ENCODE measurements at regions of chr11 and their contacts with region 1.

Region 1: GRCh38 chr11:130213143-130213978 is 53.8 kb downstream of the ST14 start:
- DNase-seq: peak; percentile 60
- H3K4me3 Mint-ChIP-seq: no peak overlapping the region
- H3K27ac Mint-ChIP-seq: no peak overlapping the region
- H3K4me1 Mint-ChIP-seq: no peaks in the 10 kb centered on the region
- H3K27me3 Mint-ChIP-seq: peaks cover 6% of the 10 kb centered on the region

Region 2: GRCh38 chr11:130249371-130249770 is 36.0 kb after region 1 on chr11:
- intact Hi-C with region 1: no loop called
- DNase-seq: no peak
- H3K4me3 Mint-ChIP-seq: no peak overlapping the region
- H3K27ac Mint-ChIP-seq: no peak overlapping the region
- H3K4me1 Mint-ChIP-seq: peaks cover 16% of the 10 kb centered on the region
- H3K27me3 Mint-ChIP-seq: no peaks in the 10 kb centered on the region

Region 3: GRCh38 chr11:130370845-130371590 is 157.7 kb after region 1 on chr11:
- intact Hi-C with region 1: loop called (anchors 1 kb)
- DNase-seq: no peak
- H3K4me3 Mint-ChIP-seq: no peak overlapping the region
- H3K27ac Mint-ChIP-seq: no peak overlapping the region
- H3K4me1 Mint-ChIP-seq: no peaks in the 10 kb centered on the region
- H3K27me3 Mint-ChIP-seq: peaks cover 3% of the 10 kb centered on the region

Region 4: GRCh38 chr11:130390071-130390758 is 176.9 kb after region 1 on chr11:
- intact Hi-C with region 1: loop called (anchors 5 kb)
- DNase-seq: no peak
- H3K4me3 Mint-ChIP-seq: no peak overlapping the region
- H3K27ac Mint-ChIP-seq: no peak overlapping the region
- H3K4me1 Mint-ChIP-seq: peaks cover 13% of the 10 kb centered on the region
- H3K27me3 Mint-ChIP-seq: peaks cover 8% of the 10 kb centered on the region